ENCODE measurements at regions of chr1 and their contacts with region 1.

Region 1: GRCh38 chr1:235067263-235068172 is 61.1 kb downstream of the TOMM20 start:
- DNase-seq: peak; percentile 64 to 74
- ATAC-seq: peak; percentile 40 to 85 (median 72)
- H3K4me3 ChIP-seq: no peak overlapping the region
- H3K27ac ChIP-seq: peak overlapping the region; percentile 7 to 84 (median 46)
- H3K4me1 ChIP-seq: peaks cover 20 to 63% (median 49%) of the 10 kb centered on the region in 9 donors
- H3K27me3 ChIP-seq: no peaks in the 10 kb centered on the region
- CTCF ChIP-seq: no peak

Region 2: DNA sequence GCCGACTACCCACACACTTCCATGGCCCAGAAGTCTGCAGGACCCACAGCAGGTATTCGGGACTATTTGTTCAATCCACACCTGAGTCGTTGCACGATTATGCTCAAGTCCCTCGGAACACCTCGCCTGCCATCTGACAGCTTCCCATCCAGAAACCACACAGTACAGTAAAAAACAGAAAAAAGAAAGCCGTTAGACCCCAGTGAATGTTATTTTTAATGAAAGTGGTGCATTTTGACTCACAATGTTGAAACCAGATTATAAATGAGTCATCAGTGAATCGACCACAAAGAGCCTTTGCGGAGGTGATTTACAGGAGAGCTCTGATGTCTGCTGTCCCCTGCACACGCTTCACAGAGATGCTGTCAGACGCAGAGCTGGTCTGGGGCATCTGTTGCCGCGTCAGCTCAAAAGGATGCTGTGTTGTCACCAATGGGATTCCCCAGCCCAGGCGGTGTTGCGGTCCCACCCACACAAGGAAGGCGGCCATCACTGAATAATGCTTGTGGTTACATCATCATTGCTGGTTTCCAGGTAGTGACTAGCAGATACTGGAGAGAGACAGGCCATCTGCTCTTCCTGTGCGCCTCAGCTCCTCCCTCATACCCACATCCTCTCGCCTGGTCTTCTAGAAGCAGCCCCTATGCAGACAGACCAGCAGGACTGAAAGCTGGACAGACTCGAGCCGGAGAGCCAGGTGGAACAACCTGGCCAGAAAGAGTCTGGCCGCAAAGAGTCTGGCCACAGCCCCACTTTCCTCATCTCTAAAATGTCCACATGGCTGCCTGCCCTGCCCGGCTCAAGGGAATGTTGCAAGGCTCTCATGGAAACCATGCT is 55.7 kb before region 1 on chr1:
- intact Hi-C with region 1: loop called in 1 of 10 experiments (anchors 10 kb)
- DNase-seq: peak; percentile 45 to 72
- ATAC-seq: peak; percentile 68 to 94 (median 80)
- H3K4me3 ChIP-seq: peak overlapping the region in 1 of 10 donors; percentile 6
- H3K27ac ChIP-seq: peak overlapping the region in 9 of 10 donors; percentile 16 to 88 (median 62)
- H3K4me1 ChIP-seq: peaks cover 3 to 41% (median 17%) of the 10 kb centered on the region in 9 donors
- H3K27me3 ChIP-seq: no peaks in the 10 kb centered on the region
- CTCF ChIP-seq: no peak

Measured in heart right ventricle (tissue), 16 donors.